CD14-positive monocyte (primary cell): ENCODE measurements at regions of chr4 and their contacts with region 1.

Region 1: GRCh38 chr4:8221476-8221875 is 22.4 kb downstream of the SH3TC1 start:
- DNase-seq: peak; percentile 90 to 98 (median 94)
- H3K4me3 ChIP-seq: peak overlapping the region in 1 of 3 experiments; percentile 58
- H3K4me3 Mint-ChIP-seq: peak overlapping the region in 1 of 2 donors; percentile 61
- H3K27ac ChIP-seq: peak overlapping the region; percentile 80 to 90
- H3K27ac Mint-ChIP-seq: peak overlapping the region; percentile 96 to 99 (median 98)
- H3K4me1 ChIP-seq: peaks cover 56 to 69% of the 10 kb centered on the region in 2 donors
- H3K4me1 Mint-ChIP-seq: peaks cover 55% of the 10 kb centered on the region
- H3K27me3 ChIP-seq: no peaks in the 10 kb centered on the region
- H3K27me3 Mint-ChIP-seq: peaks cover 1 to 7% (median 2%) of the 10 kb centered on the region in 3 donors
- CTCF ChIP-seq: no peak

Region 2: DNA sequence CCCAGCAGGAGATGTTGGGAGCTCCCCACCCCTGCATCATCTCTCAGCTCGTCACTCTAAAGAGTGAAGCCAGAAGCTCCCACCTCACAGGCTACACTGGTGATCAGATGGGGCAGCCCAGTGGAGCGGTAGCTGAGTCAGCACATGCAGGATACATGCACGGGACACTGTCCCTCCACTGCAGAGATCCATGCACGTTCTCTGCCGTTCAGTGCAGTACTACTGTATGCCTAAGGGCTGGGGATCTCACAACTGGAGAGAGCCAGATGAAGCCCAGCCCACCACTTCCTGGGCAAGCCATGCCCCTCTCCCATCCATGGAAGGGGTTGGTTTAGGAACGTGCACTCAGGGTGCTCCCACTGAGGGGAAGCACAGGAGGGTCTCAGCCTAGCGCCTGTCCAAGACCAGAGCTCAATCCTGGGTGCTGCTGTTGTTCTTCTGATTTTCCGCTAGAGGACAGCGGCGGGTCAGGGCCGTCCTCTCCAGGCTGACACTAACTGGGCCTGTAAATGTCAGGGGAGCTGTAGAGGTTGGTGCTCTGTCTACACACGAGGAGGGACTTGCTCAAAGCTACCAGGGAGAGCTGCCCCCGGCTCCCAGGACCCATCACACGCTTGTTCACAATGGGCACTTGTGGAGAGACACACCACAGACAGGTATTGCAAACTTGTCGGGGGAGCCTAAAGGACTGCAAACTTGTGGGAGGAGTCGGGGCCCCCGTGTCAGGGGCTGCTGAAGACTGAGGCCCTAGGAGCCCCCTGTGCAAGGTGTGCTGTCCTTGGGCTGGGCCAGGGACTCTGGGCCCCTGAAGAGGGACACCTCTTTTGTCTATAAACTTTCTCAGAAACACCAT is 44.7 kb before region 1 on chr4:
- intact Hi-C with region 1: loop called (anchors 5 kb)
- DNase-seq: peak; percentile 42 to 65 (median 61)
- H3K4me3 ChIP-seq: no peak overlapping the region
- H3K4me3 Mint-ChIP-seq: no peak overlapping the region
- H3K27ac ChIP-seq: no peak overlapping the region
- H3K27ac Mint-ChIP-seq: peak overlapping the region in 1 of 7 donors; percentile 40
- H3K4me1 ChIP-seq: peaks cover under 1 to 8% of the 10 kb centered on the region in 2 donors
- H3K4me1 Mint-ChIP-seq: peaks cover 7% of the 10 kb centered on the region
- H3K27me3 ChIP-seq: no peaks in the 10 kb centered on the region
- H3K27me3 Mint-ChIP-seq: peaks cover 3 to 10% (median 4%) of the 10 kb centered on the region in 3 donors
- CTCF ChIP-seq: peak; percentile 93

Region 3: DNA sequence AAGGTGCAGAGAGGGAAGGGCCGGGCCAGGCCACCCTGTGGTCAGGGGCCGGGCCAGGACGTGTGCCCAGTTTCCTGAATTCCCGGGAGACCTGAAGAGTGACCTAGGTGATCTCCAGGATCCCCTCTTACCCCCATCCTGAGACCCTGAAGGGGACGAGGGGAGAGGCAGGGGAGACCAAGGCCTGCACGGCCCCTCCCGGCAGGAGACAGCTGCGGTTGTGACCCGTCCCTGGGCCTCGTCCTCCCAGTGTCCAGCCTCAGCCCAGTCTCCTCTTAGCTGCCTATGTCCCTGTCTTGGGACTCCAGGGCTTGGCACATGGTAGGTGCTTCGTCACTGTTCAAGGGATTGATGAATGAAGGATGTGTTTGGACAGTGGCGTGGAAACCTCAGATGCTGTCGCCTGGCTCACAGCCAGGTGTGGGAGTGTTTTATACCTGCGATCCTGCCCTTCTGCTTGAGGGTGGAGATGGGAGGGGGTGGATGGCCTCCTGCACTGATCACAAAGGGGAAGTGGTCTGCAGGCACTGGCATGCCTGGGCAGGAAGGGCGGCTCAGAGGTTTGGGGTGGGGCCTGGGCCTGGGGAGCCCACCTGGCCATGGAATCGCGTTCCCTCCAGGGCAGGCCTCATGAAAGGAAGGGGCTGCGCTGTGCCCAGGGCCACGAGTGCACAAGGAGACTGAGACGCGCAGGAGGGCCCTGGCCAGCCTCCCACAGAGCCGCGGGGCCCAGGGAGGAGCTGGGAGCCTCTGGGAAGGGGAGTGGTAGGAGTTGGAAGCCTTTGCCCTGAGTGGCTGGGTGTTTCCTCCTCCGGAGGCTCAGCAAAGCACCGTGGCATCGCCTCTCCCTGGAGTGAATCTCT is 15.5 kb before region 1 on chr4:
- intact Hi-C with region 1: loop called in 1 of 2 experiments (anchors 2 kb)
- DNase-seq: peak; percentile 21 to 39 (median 25)
- H3K4me3 ChIP-seq: peak overlapping the region in 1 of 3 experiments; percentile 45
- H3K4me3 Mint-ChIP-seq: peak overlapping the region; percentile 58 to 78
- H3K27ac ChIP-seq: peak overlapping the region; percentile 28 to 62
- H3K27ac Mint-ChIP-seq: peak overlapping the region; percentile 76 to 93 (median 89)
- H3K4me1 ChIP-seq: peaks cover 95 to 99% of the 10 kb centered on the region in 2 donors
- H3K4me1 Mint-ChIP-seq: peaks cover 91% of the 10 kb centered on the region
- H3K27me3 ChIP-seq: no peaks in the 10 kb centered on the region
- H3K27me3 Mint-ChIP-seq: peaks cover 0 to 2% (median 0%) of the 10 kb centered on the region in 3 donors
- CTCF ChIP-seq: no peak